Sciatic nerve (tissue), 2 donors: ENCODE measurements at regions of chr3 and their contacts with region 1.

Region 1: DNA sequence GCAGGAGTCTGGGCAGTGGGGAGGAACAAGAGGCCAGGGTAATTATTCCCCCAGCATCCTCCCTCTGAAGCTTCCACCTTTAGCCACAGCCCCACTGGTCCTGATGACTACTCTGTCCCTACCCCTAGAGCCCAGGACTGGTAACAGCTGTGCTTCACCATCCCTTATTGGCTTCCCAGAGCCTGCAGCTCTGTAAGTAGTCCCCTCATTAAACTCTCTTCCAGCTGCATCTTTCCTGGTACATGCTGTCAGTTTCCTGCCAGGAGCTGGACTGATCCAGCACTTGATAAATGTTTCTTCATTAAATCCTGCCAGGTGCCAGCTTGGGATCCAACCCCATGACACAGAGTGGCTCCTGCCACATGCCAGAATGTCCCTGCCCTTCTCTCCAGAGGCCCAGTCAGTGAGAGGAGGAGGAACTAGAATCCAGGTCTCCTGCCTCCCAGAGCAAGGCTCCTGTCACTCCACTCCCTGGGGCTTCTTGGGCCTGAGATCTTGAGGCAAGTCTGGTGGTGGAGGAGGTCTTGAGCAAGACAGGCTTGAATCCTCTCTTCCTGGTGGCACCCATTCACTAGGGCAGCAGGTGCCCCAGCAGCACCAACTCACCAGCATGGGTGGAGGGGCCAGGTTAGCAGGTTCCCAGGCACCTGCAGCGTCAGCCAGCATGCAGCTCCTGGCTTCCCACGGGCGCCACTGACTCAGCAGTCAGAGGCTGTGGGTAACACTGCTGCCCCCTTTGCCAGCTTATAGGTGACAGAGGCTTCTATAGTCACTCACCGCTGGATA is 27.6 kb downstream of the FBXW12 start:
- DNase-seq: no peak
- ATAC-seq: no peak

Region 2: GRCh38 chr3:48439820-48440589 is 40.4 kb after region 1 on chr3 and contains the starts of genes CCDC51 and TMA7:
- intact Hi-C with region 1: loop called (anchors 5 kb)
- DNase-seq: peak; percentile 99
- ATAC-seq: peak; percentile 99
- total RNA-seq, gene CCDC51: 10.6 TPM
- total RNA-seq, gene TMA7: 154 TPM

Region 3: GRCh38 chr3:48556793-48557626 is 157.4 kb after region 1 on chr3 and contains the start of gene PFKFB4:
- intact Hi-C with region 1: loop called (anchors 10 kb)
- DNase-seq: peak; percentile 99
- ATAC-seq: peak; percentile 95
- total RNA-seq, gene PFKFB4: 7.9 TPM